ENCODE measurements at regions of chr11 and their contacts with region 1.

Region 1: DNA sequence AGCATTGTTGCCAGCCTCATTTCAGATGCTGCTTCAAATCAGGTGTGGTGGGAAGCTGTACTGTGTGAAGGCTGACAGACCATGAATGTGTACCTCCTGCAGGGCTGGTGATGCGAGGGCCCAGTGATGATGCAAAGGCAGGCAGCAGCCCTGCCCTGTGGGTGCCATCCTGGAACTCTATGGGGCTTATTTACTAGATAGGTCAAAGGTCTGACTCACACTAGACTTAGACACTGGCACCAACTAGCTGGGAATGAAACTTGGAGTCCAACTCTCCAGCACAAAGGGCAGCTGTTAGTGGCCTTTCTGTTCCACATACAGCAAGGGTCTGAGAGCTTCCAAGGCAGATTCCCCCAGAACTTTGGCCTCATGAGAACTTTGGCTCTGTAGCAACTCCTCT is 138.4 kb downstream of the TTC17 start:
- DNase-seq: no peak
- ATAC-seq: no peak
- H3K4me3 ChIP-seq: no peak overlapping the region
- H3K27ac ChIP-seq: no peak overlapping the region
- H3K4me1 ChIP-seq: no peaks in the 10 kb centered on the region
- H3K27me3 ChIP-seq: no peaks in the 10 kb centered on the region
- CTCF ChIP-seq: no peak
- POLR2A ChIP-seq: no peak

Region 2: GRCh38 chr11:43358801-43359421 is 138.2 kb before region 1 on chr11 and contains the start of gene TTC17:
- in situ Hi-C with region 1: no loop called
- intact Hi-C with region 1: no loop called
- DNase-seq: peak; percentile 90 to 91
- ATAC-seq: peak; percentile 97 to 98
- H3K4me3 ChIP-seq: peak within 1 kb of the TSS; percentile 71 to 98 (median 92)
- H3K27ac ChIP-seq: peak within 1 kb of the TSS; percentile 82 to 91 (median 89)
- H3K4me1 ChIP-seq: peaks cover 19 to 25% of the 10 kb centered on the region in 2 donors
- H3K27me3 ChIP-seq: no peaks in the 10 kb centered on the region
- CTCF ChIP-seq: no peak
- POLR2A ChIP-seq: peak; percentile 82 to 87
- total RNA-seq, gene TTC17: 31.6 to 69.0 (median 37.5) TPM

Region 3: GRCh38 chr11:43434893-43435292 is 62.3 kb before region 1 on chr11:
- in situ Hi-C with region 1: no loop called
- intact Hi-C with region 1: no loop called
- DNase-seq: no peak
- ATAC-seq: no peak
- H3K4me3 ChIP-seq: no peak overlapping the region
- H3K27ac ChIP-seq: no peak overlapping the region
- H3K4me1 ChIP-seq: no peaks in the 10 kb centered on the region
- H3K27me3 ChIP-seq: no peaks in the 10 kb centered on the region
- CTCF ChIP-seq: no peak
- POLR2A ChIP-seq: no peak

Region 4: GRCh38 chr11:43561832-43562231 is 64.7 kb after region 1 on chr11:
- in situ Hi-C with region 1: loop called in 1 of 4 experiments (anchors 5 kb)
- intact Hi-C with region 1: no loop called
- DNase-seq: no peak
- ATAC-seq: no peak
- H3K4me3 ChIP-seq: no peak overlapping the region
- H3K27ac ChIP-seq: no peak overlapping the region
- H3K4me1 ChIP-seq: peaks cover 0 to 2% of the 10 kb centered on the region in 2 donors
- H3K27me3 ChIP-seq: peaks cover 4 to 35% (median 24%) of the 10 kb centered on the region in 3 donors
- CTCF ChIP-seq: no peak
- POLR2A ChIP-seq: no peak

Region 5: DNA sequence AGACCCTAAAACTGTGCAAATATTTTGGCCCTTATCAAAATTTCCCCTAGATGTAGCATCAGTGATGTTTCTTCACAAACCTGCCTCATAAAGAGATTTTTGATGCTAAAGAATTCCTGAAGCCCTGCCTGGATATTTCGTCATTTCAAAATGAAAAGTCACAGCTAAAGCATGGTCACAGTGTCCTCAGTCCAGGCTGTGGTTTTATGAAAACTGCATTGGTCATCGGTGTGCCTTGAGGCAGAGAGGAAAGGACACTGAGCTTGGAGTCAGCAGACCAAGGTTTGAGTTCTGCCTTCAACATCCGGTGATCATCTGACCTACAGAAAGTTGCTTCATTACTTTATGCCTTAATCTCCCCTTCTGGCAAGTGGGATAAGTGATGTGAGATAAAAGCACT is 348.7 kb after region 1 on chr11:
- in situ Hi-C with region 1: loop called in 1 of 4 experiments (anchors 25 kb)
- intact Hi-C with region 1: loop called (anchors 10 kb)
- DNase-seq: no peak
- ATAC-seq: no peak
- H3K4me3 ChIP-seq: no peak overlapping the region
- H3K27ac ChIP-seq: no peak overlapping the region
- H3K4me1 ChIP-seq: no peaks in the 10 kb centered on the region
- H3K27me3 ChIP-seq: no peaks in the 10 kb centered on the region
- CTCF ChIP-seq: no peak
- POLR2A ChIP-seq: no peak